BJ (cell line): ENCODE measurements at regions of chr3 and their contacts with region 1.

Region 1: GRCh38 chr3:5057857-5058324 is 64.2 kb upstream of the ARL8B start:
- DNase-seq: peak; percentile 68
- H3K4me3 ChIP-seq: no peak overlapping the region
- H3K27me3 ChIP-seq: no peaks in the 10 kb centered on the region
- CTCF ChIP-seq: peak; percentile 73

Region 2: GRCh38 chr3:4656059-4656458 is 401.8 kb before region 1 on chr3:
- CTCF ChIA-PET with region 1: interaction called, 15 read pairs
- POLR2A ChIA-PET with region 1: no interaction called
- DNase-seq: no peak
- H3K4me3 ChIP-seq: no peak overlapping the region
- H3K27me3 ChIP-seq: no peaks in the 10 kb centered on the region
- CTCF ChIP-seq: peak; percentile 90

Region 3: GRCh38 chr3:4703054-4703480 is 354.8 kb before region 1 on chr3:
- CTCF ChIA-PET with region 1: no interaction called
- POLR2A ChIA-PET with region 1: interaction called, 10 read pairs
- DNase-seq: no peak
- H3K4me3 ChIP-seq: no peak overlapping the region
- H3K27me3 ChIP-seq: no peaks in the 10 kb centered on the region
- CTCF ChIP-seq: no peak

Region 4: GRCh38 chr3:4712143-4712542 is 345.7 kb before region 1 on chr3:
- CTCF ChIA-PET with region 1: interaction called, 178 read pairs
- POLR2A ChIA-PET with region 1: interaction called, 3 read pairs
- DNase-seq: no peak
- H3K4me3 ChIP-seq: no peak overlapping the region
- H3K27me3 ChIP-seq: no peaks in the 10 kb centered on the region
- CTCF ChIP-seq: no peak

Region 5: DNA sequence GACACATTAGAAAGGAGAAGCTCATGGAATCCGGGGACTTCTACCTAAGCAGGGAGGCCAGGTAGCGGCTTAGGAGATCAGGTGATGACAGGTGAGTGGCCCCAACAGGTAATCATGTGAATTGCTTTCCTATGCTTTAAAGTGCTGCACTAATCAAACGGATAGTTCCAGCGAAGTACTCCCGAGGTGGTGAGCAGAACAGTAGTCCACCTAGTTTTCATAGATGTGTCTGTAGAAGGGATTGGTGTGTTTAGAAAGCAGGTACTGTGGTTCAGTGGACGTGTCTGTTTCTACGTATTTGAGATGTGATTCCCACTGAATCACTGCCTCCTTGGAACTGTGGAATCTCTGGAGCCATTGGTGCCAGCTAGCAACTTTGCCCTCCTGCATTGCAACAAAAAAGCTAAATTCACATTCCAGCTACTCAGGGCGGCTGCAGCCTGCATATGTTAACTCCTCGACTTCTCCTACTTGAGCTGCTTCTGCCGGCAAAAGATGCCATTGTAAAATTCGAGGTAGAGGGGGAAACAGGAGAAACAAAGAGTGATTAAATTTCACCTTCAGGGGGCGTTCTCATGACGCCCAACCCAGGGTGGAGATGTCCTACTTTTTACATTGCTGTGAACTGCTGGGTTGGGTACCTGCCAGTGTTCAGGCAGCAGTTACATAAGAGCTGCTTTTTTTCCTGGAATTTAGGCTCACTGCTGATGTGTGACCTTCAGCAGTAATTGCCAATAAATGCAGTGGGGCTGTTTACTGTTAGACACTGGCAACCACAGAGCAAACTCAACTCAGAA is 337.4 kb before region 1 on chr3:
- CTCF ChIA-PET with region 1: interaction called, 178 read pairs
- POLR2A ChIA-PET with region 1: interaction called, 3 read pairs
- DNase-seq: no peak
- H3K4me3 ChIP-seq: no peak overlapping the region
- H3K27me3 ChIP-seq: no peaks in the 10 kb centered on the region
- CTCF ChIP-seq: peak; percentile 27

Region 6: GRCh38 chr3:4978204-4978965 is 79.5 kb before region 1 on chr3:
- CTCF ChIA-PET with region 1: interaction called, 10 read pairs
- POLR2A ChIA-PET with region 1: no interaction called
- DNase-seq: peak; percentile 90
- H3K4me3 ChIP-seq: peak overlapping the region; percentile 72
- H3K27me3 ChIP-seq: no peaks in the 10 kb centered on the region
- CTCF ChIP-seq: no peak

Region 7: DNA sequence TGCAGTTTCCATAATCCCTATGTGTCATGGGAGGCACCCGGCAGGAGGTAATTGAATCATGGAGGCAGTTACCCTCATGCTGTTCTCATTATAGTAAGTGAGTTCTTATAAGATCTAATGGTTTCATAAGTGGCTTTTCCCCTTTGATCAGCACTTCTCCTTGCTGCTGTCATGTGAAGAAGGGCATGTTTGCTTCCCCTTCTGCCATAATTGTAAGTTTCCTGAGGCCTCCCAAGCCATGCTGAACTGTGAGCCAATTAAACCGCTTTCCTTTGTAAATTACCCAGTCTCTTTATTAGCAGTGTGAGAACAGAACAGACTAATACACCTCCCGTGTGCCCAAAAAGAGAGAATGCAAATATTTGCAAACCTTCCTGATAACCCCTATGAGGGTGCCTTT is 10.1 kb before region 1 on chr3:
- CTCF ChIA-PET with region 1: no interaction called
- POLR2A ChIA-PET with region 1: no interaction called
- DNase-seq: no peak
- H3K4me3 ChIP-seq: no peak overlapping the region
- H3K27me3 ChIP-seq: no peaks in the 10 kb centered on the region
- CTCF ChIP-seq: no peak

Region 8: GRCh38 chr3:5187156-5187919 is 129.4 kb after region 1 on chr3 and contains the start of gene EDEM1:
- CTCF ChIA-PET with region 1: no interaction called
- POLR2A ChIA-PET with region 1: no interaction called
- DNase-seq: peak; percentile 82
- H3K4me3 ChIP-seq: peak within 1 kb of the TSS; percentile 88
- H3K27me3 ChIP-seq: no peaks in the 10 kb centered on the region
- CTCF ChIP-seq: no peak
- polyA plus RNA-seq, gene EDEM1: 21.3 and 29.8 TPM in 2 replicates